Sciatic nerve (tissue), 2 donors: ENCODE measurements at regions of chr7 and their contacts with region 1.

Region 1: GRCh38 chr7:105623906-105624305 is 42.6 kb upstream of the EFCAB10 start:
- DNase-seq: no peak
- ATAC-seq: no peak

Region 2: GRCh38 chr7:105638902-105639495 is 15.1 kb after region 1 on chr7:
- intact Hi-C with region 1: loop called (anchors 1 kb)
- DNase-seq: no peak
- ATAC-seq: no peak

Region 3: DNA sequence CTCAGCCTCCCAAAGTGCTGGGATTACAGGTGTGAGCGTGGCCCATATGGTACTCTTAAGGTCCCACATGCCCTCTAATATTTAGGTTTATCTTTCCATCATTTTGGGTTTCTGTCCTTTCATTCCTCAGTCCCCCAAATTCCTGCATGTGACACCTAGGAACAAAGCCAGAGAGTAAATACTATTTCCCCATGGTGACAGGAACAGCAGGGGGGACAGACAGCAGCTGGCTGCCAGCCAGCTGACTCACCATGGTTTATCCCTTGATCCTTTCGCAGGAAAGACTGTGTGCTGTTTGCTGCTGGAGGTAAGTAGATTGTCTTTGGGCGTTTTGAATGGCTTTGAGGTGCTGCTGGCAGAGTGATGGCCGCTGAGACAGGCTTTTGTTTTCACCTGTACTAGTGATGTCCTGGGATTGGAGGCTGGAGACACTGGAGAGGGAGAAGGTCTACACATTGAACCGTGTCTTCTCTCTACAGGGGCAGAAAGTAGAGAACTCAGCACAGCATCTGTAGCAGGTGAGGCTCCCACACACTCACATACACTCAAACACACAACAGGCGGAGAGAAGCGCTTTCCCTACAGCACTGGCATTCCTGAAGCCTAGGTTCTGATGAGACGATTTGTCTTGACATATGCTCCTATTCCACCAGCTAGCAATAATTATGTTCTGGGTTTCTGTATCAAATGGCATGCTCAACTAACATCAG is 41.1 kb after region 1 on chr7:
- intact Hi-C with region 1: no loop called
- DNase-seq: no peak
- ATAC-seq: no peak